CD8-positive, alpha-beta T cell (primary cell): ENCODE measurements at regions of chr12 and their contacts with region 1.

Region 1: GRCh38 chr12:47270782-47271664 is 191.3 kb upstream of the AMIGO2 start:
- DNase-seq: no peak
- ATAC-seq: peak; percentile 71
- H3K4me3 ChIP-seq: no peak overlapping the region
- H3K4me3 Mint-ChIP-seq: no peak overlapping the region
- H3K27ac ChIP-seq: no peak overlapping the region
- H3K27ac Mint-ChIP-seq: peak overlapping the region; percentile 58
- H3K4me1 ChIP-seq: peaks cover 69% of the 10 kb centered on the region
- H3K4me1 Mint-ChIP-seq: peaks cover 72% of the 10 kb centered on the region
- H3K27me3 ChIP-seq: no peaks in the 10 kb centered on the region
- H3K27me3 Mint-ChIP-seq: no peaks in the 10 kb centered on the region
- CTCF ChIP-seq: no peak

Region 2: GRCh38 chr12:47236109-47236714 is 34.8 kb before region 1 on chr12:
- CTCF ChIA-PET with region 1: interaction called, 4 read pairs
- POLR2A ChIA-PET with region 1: no interaction called
- intact Hi-C with region 1: loop called in 1 of 2 experiments (anchors 5 kb)
- DNase-seq: no peak
- ATAC-seq: no peak
- H3K4me3 ChIP-seq: no peak overlapping the region
- H3K4me3 Mint-ChIP-seq: no peak overlapping the region
- H3K27ac ChIP-seq: no peak overlapping the region
- H3K27ac Mint-ChIP-seq: peak overlapping the region; percentile 73
- H3K4me1 ChIP-seq: peaks cover 44% of the 10 kb centered on the region
- H3K4me1 Mint-ChIP-seq: peaks cover 61% of the 10 kb centered on the region
- H3K27me3 ChIP-seq: no peaks in the 10 kb centered on the region
- H3K27me3 Mint-ChIP-seq: no peaks in the 10 kb centered on the region
- CTCF ChIP-seq: no peak